ENCODE measurements at regions of chr2 and their contacts with region 1.

Region 1: DNA sequence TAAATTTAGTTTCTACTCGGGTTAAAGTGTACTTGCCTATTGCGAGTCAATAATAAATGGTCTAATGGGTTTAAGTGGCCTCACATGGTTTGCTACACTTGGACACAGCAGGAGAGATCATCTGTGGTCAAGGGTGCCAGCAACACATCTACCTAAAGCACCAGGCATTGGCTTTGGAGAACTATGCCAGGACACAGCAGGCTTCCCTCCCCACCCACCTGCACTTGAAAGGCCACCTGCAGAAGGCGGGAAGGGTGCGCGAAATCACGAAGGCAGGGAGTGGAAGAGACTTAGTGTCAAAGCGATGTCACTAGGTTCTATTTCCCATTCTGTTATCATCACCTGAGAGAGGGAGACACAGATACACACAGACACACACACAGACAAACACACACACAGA is 44.5 kb downstream of the MYT1L start:
- DNase-seq: no peak
- ATAC-seq: no peak
- H3K4me3 ChIP-seq: no peak overlapping the region
- H3K27ac ChIP-seq: no peak overlapping the region
- H3K4me1 ChIP-seq: no peaks in the 10 kb centered on the region
- H3K27me3 ChIP-seq: no peaks in the 10 kb centered on the region

Region 2: GRCh38 chr2:1886405-1886992 is 400.1 kb before region 1 on chr2:
- intact Hi-C with region 1: loop called in 3 of 4 experiments (anchors 10 kb)
- DNase-seq: peak; percentile 68 to 88 (median 78)
- ATAC-seq: peak; percentile 54 to 73
- H3K4me3 ChIP-seq: no peak overlapping the region
- H3K27ac ChIP-seq: no peak overlapping the region
- H3K4me1 ChIP-seq: no peaks in the 10 kb centered on the region
- H3K27me3 ChIP-seq: no peaks in the 10 kb centered on the region